ENCODE measurements at regions of chr5 and their contacts with region 1.

Region 1: DNA sequence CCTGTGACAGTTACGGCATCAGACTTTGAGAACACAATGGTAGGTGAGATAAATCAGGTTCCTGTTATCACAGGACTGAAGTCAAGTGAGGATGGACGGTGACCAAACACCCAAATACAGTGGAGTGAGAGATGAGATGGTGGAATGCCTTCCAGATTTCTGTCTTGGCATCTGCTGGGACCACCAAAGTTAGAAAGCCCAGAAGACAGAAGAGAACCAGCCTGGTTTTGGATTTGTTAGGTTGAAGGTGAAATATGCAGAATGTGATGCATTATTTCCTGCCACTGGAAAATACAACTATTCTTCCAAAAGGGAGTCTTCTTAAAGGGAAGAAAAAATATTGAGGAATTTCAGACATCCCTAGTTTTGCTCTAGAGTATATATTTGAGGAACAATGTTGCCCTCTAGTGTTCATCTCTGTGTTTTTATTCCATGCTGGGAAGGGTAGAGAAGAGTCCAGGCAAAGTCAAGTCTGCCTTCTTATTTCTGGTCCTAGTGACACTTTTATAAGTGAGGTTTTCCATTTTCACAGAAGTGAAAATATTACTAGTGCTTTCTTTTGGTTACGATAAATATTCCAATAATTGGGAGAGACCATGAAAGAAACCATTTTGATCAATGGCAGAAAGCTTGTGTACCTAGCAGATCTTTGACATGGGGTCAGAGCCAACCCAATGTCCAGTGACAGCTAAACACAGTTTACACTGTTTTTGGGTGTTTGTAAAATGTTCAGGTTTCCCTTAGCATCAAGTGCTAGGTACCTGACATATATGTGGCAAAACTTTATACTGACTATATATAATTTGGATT is 142.3 kb upstream of the ANKH start:
- DNase-seq: peak; percentile 58
- ATAC-seq: peak; percentile 89
- H3K4me3 ChIP-seq: no peak overlapping the region
- H3K27ac ChIP-seq: no peak overlapping the region
- H3K4me1 ChIP-seq: peaks cover 8 to 9% of the 10 kb centered on the region in 2 experiments
- H3K27me3 ChIP-seq: peaks cover 7% of the 10 kb centered on the region; the same call in 1 of the 2 replicates
- CTCF ChIP-seq: peak; percentile 56 to 75 (median 59); a peak in 5 of 6 replicates
- POLR2A ChIP-seq: no peak
- RAD21 ChIP-seq: peak; percentile 78

Region 2: DNA sequence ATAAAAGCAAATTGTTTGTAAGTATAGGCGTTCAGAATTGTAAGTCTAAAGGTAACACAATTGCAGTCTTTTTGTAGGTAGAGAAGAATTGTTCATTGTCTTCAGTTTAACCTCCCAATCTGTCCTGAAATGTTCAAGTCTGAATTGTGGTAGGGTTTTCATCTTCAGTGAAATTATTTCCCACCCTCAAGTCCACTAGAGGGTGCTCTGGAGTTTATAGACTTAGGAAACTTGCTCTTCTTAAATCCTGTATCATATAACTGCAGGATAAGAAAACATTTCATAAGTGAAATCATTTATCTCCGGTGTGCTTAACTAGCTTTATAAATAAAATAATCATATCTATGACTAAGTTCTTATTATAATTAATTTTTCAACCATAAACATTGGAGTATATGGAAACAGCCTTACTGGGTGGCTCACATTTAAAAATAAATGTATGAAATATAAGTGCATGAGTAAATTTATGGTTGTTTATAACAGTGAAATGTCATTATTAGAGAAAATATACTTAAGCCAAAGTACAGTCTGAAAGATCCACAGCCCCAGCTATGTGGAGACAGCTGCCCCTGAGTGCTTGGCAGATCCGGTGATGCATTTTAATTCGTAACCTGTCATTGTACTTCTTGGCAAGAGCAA is 614.7 kb before region 1 on chr5:
- CTCF ChIA-PET with region 1: no interaction called
- POLR2A ChIA-PET with region 1: no interaction called
- RAD21 ChIA-PET with region 1: no interaction called
- intact Hi-C with region 1: loop called (anchors 10 kb)
- DNase-seq: peak; percentile 21
- ATAC-seq: peak; percentile 70; the same call in 1 of the 2 replicates
- H3K4me3 ChIP-seq: no peak overlapping the region
- H3K27ac ChIP-seq: no peak overlapping the region
- H3K4me1 ChIP-seq: peaks cover 0 to 8% of the 10 kb centered on the region in 2 experiments; a peak in 1 of 4 replicates
- H3K27me3 ChIP-seq: no peaks in the 10 kb centered on the region
- CTCF ChIP-seq: peak in 2 of 3 experiments; percentile 63 to 67; a peak in 4 of 6 replicates
- POLR2A ChIP-seq: no peak
- RAD21 ChIP-seq: peak; percentile 43

Region 3: GRCh38 chr5:14685757-14686156 is 328.1 kb before region 1 on chr5:
- CTCF ChIA-PET with region 1: interaction called, 8 read pairs
- POLR2A ChIA-PET with region 1: no interaction called
- RAD21 ChIA-PET with region 1: interaction called in 1 of 2 experiments, 4 read pairs
- intact Hi-C with region 1: loop called (anchors 1 kb)
- DNase-seq: peak; percentile 23
- ATAC-seq: peak; percentile 84
- H3K4me3 ChIP-seq: no peak overlapping the region
- H3K27ac ChIP-seq: no peak overlapping the region
- H3K4me1 ChIP-seq: no peaks in the 10 kb centered on the region
- H3K27me3 ChIP-seq: no peaks in the 10 kb centered on the region
- CTCF ChIP-seq: peak; percentile 45 to 75 (median 59); a peak in 5 of 6 replicates
- POLR2A ChIP-seq: no peak
- RAD21 ChIP-seq: peak; percentile 67

Region 4: DNA sequence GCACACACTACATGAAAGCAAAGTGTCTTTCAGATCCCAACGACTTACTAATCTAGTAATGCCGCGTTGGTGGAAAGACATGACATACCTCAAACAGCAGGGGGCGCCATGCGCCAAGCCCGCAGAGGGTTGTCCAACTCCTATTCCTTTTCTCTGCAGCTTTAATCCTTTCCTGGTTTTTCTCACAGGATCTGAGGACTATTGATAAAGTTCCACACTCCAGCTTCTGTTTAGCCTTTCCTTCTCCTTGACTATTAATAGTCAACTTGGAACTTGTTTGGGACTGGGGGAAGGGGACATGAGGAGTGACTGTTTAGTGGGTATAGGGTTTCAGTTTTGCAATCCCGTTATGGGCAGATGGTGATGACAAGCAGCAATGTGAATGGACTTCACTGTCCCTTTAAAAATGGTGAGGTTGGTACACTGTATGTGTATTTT is 286.4 kb before region 1 on chr5:
- CTCF ChIA-PET with region 1: interaction called, 7 read pairs
- POLR2A ChIA-PET with region 1: no interaction called
- RAD21 ChIA-PET with region 1: no interaction called
- intact Hi-C with region 1: loop called (anchors 1 kb)
- DNase-seq: peak; percentile 54
- ATAC-seq: peak; percentile 87
- H3K4me3 ChIP-seq: no peak overlapping the region
- H3K27ac ChIP-seq: no peak overlapping the region
- H3K4me1 ChIP-seq: peaks cover 0 to 10% of the 10 kb centered on the region in 2 experiments; a peak in 1 of 4 replicates
- H3K27me3 ChIP-seq: no peaks in the 10 kb centered on the region
- CTCF ChIP-seq: peak; percentile 85 to 97 (median 87)
- POLR2A ChIP-seq: no peak
- RAD21 ChIP-seq: peak; percentile 95

Region 5: DNA sequence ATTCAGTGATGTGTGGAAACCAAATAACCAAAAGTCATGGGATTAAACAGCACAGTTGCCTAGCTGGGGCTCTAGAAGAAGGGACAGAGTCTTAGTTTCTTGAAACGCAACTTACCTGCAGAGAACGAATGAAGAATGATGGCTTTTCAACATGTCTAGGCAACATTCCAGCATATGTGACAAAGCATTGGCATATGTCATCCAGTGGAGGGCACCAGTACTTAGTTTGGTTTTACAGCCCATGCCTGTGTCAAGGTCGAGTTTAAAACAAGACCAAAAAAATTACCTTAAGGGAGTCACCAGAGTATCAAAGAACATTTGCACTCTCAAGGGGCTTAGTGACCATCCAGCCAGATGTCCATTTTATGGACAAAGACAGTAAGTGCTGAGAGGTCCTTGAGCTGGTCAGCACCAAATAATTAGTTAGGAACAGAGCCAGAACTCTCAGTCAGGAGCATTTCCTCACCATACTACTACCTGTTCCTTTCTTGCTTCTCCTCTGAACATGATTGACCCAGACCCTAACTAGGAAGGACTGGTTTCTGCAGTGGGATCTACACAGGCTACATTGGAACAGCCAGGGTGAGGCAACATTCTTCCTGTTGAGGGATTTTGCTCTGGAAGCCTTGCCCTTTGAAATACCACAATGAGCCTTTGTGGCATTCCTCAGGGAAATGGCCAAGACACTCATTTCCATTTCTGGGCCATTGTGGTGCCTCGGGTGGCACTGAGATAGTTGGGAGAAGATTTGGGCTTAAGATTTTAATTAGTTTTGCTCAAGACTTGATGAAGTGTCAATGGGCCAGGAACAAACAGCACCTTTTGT is 66.8 kb before region 1 on chr5:
- CTCF ChIA-PET with region 1: no interaction called
- POLR2A ChIA-PET with region 1: no interaction called
- RAD21 ChIA-PET with region 1: no interaction called
- intact Hi-C with region 1: no loop called
- DNase-seq: peak; percentile 37
- ATAC-seq: peak; percentile 93
- H3K4me3 ChIP-seq: no peak overlapping the region
- H3K27ac ChIP-seq: no peak overlapping the region
- H3K4me1 ChIP-seq: peaks cover 0 to 6% of the 10 kb centered on the region in 2 experiments; a peak in 1 of 4 replicates
- H3K27me3 ChIP-seq: no peaks in the 10 kb centered on the region
- CTCF ChIP-seq: peak; percentile 44 to 60 (median 56); a peak in 5 of 6 replicates
- POLR2A ChIP-seq: no peak
- RAD21 ChIP-seq: peak; percentile 43

Measured in HCT116 (cell line).